ENCODE measurements at regions of chr17 and their contacts with region 1.

Region 1: GRCh38 chr17:68435876-68436842 is 21.1 kb downstream of the WIPI1 start:
- DNase-seq: peak; percentile 78 to 82
- ATAC-seq: peak; percentile 82 to 91
- H3K4me3 ChIP-seq: no peak overlapping the region
- H3K27ac ChIP-seq: no peak overlapping the region
- H3K4me1 ChIP-seq: 0 out of 3 replicates have a peak, but pooled peaks cover 3% of the 10 kb centered on the region
- CTCF ChIP-seq: peak; percentile 91
- EP300 ChIP-seq: no peak
- POLR2A ChIP-seq: no peak
- RAD21 ChIP-seq: peak; percentile 85 to 95

Region 2: GRCh38 chr17:68247445-68248198 is 188.5 kb before region 1 on chr17 and contains the start of gene AMZ2:
- CTCF ChIA-PET with region 1: interaction called, 32 read pairs
- POLR2A ChIA-PET with region 1: interaction called, 3 read pairs
- DNase-seq: peak; percentile 85 to 96
- ATAC-seq: peak; percentile 95 to 98
- H3K4me3 ChIP-seq: peak within 1 kb of the TSS; percentile 67
- H3K27ac ChIP-seq: peak within 1 kb of the TSS; percentile 87 to 94
- H3K4me1 ChIP-seq: peaks cover 9% of the 10 kb centered on the region; the same call in 2 of the 3 replicates
- CTCF ChIP-seq: no peak
- EP300 ChIP-seq: no peak
- POLR2A ChIP-seq: peak; percentile 87
- RAD21 ChIP-seq: no peak
- polyA plus RNA-seq, gene AMZ2: 186 and 201 TPM in 2 replicates

Region 3: GRCh38 chr17:68318103-68318991 is 117.8 kb before region 1 on chr17:
- CTCF ChIA-PET with region 1: interaction called, 11 read pairs
- POLR2A ChIA-PET with region 1: no interaction called
- DNase-seq: peak; percentile 43 to 53
- ATAC-seq: peak; percentile 67 to 84
- H3K4me3 ChIP-seq: no peak overlapping the region
- H3K27ac ChIP-seq: no peak overlapping the region
- H3K4me1 ChIP-seq: peaks cover 11% of the 10 kb centered on the region
- CTCF ChIP-seq: no peak
- EP300 ChIP-seq: no peak
- POLR2A ChIP-seq: no peak
- RAD21 ChIP-seq: no peak

Region 4: GRCh38 chr17:68391561-68392268 is 44.4 kb before region 1 on chr17:
- CTCF ChIA-PET with region 1: interaction called, 65 read pairs
- POLR2A ChIA-PET with region 1: no interaction called
- DNase-seq: no peak
- ATAC-seq: no peak
- H3K4me3 ChIP-seq: no peak overlapping the region
- H3K27ac ChIP-seq: no peak overlapping the region
- H3K4me1 ChIP-seq: no peaks in the 10 kb centered on the region
- CTCF ChIP-seq: no peak
- EP300 ChIP-seq: no peak
- POLR2A ChIP-seq: no peak
- RAD21 ChIP-seq: no peak

Region 5: DNA sequence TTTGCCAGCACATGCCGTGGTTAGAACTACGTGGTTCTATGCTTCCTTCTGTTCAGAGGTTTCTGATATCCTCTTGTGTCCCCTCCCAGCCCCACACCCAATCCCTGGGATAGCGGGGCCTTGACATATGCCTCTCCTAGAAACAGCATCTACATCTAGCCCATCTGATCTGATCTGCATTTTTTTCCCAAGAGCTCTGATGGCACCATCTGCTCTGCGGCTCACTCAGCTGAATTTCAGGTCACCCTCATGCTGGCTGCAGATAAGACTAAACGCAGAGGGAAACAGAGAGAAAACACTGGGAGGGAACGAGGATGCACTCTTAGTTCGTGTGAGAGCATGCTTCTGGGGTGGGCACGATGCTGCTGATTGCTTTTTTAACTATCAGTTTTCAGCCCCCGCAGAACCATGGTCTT is 10.5 kb after region 1 on chr17:
- CTCF ChIA-PET with region 1: interaction called, 115 read pairs
- POLR2A ChIA-PET with region 1: no interaction called
- DNase-seq: no peak
- ATAC-seq: no peak
- H3K4me3 ChIP-seq: no peak overlapping the region
- H3K27ac ChIP-seq: no peak overlapping the region
- H3K4me1 ChIP-seq: no peaks in the 10 kb centered on the region
- CTCF ChIP-seq: no peak
- EP300 ChIP-seq: no peak
- POLR2A ChIP-seq: no peak
- RAD21 ChIP-seq: no peak

Measured in A549 (cell line).